H1 (cell line): ENCODE measurements at regions of chrX and their contacts with region 1.

Region 1: GRCh38 chrX:68732906-68733493 is 85.5 kb downstream of the STARD8 start:
- DNase-seq: peak; percentile 10 to 84
- H3K4me3 ChIP-seq: no peak overlapping the region
- H3K27ac ChIP-seq: no peak overlapping the region
- H3K4me1 ChIP-seq: no peaks in the 10 kb centered on the region
- H3K27me3 ChIP-seq: no peaks in the 10 kb centered on the region
- CTCF ChIP-seq: peak; percentile 76 to 81 (median 79)
- EP300 ChIP-seq: no peak
- POLR2A ChIP-seq: no peak
- RAD21 ChIP-seq: peak; percentile 87 to 88

Region 2: GRCh38 chrX:68693481-68694434 is 39.2 kb before region 1 on chrX:
- CTCF ChIA-PET with region 1: no interaction called
- POLR2A ChIA-PET with region 1: no interaction called
- DNase-seq: peak in 1 of 2 experiments; percentile 71
- H3K4me3 ChIP-seq: peak overlapping the region; percentile 40 to 70 (median 46)
- H3K27ac ChIP-seq: no peak overlapping the region
- H3K4me1 ChIP-seq: peaks cover 1 to 4% (median 3%) of the 10 kb centered on the region in 4 experiments
- H3K27me3 ChIP-seq: peaks cover 0 to 6% (median 3%) of the 10 kb centered on the region in 4 experiments; a peak in 3 of 7 replicates
- CTCF ChIP-seq: no peak
- EP300 ChIP-seq: no peak
- POLR2A ChIP-seq: 0 out of 3 replicates have a peak, but pooled peaks of 1 of the 2 experiments have one; percentile 34
- RAD21 ChIP-seq: no peak

Region 3: GRCh38 chrX:68749426-68749825 is 16.4 kb after region 1 on chrX:
- CTCF ChIA-PET with region 1: interaction called, 12 read pairs
- POLR2A ChIA-PET with region 1: no interaction called
- DNase-seq: no peak
- H3K4me3 ChIP-seq: no peak overlapping the region
- H3K27ac ChIP-seq: no peak overlapping the region
- H3K4me1 ChIP-seq: no peaks in the 10 kb centered on the region
- H3K27me3 ChIP-seq: no peaks in the 10 kb centered on the region
- CTCF ChIP-seq: no peak
- EP300 ChIP-seq: no peak
- POLR2A ChIP-seq: no peak
- RAD21 ChIP-seq: no peak

Region 4: DNA sequence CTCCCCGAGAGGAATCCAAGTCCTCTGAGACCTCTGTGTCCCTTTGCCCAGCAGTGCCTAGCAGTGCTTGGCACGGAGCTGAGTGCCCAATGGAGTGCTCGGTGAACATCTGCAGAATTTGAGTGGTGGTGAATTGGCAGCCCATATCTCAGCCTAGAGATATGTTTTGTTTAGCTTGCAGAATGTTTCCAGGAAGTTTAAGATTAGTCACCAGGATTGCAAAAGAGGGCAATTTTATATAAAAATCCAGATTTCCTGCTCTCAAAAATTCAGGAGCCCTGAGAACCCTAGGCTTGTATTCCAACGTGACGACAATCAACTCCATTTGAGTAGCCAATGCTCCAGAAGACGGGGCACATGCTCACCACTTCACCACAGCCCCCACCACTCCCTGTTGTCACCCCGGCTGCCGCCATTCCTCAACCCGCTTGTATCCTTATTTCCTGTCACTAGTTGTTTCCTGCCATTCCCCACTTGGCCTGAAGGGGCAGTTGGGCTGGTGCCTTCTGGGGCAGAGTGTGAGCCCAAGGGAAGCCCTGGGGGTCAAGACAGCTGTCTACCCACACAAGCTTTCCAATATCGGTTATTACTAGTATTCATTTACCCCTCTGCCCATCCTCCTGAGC is 212.7 kb after region 1 on chrX:
- CTCF ChIA-PET with region 1: no interaction called
- POLR2A ChIA-PET with region 1: no interaction called
- DNase-seq: peak in 1 of 2 experiments; percentile 53
- H3K4me3 ChIP-seq: no peak overlapping the region
- H3K27ac ChIP-seq: no peak overlapping the region
- H3K4me1 ChIP-seq: 0 out of 7 replicates have a peak, but pooled peaks cover 0 to 1% (median 0%) of the 10 kb centered on the region in 4 experiments
- H3K27me3 ChIP-seq: no peaks in the 10 kb centered on the region
- CTCF ChIP-seq: peak; percentile 42 to 60 (median 54)
- EP300 ChIP-seq: no peak
- POLR2A ChIP-seq: no peak
- RAD21 ChIP-seq: peak; percentile 29 to 56; a peak in 3 of 4 replicates